Panc1 (cell line): ENCODE measurements at regions of chr3 and their contacts with region 1.

Region 1: GRCh38 chr3:121481106-121481880 is 64.5 kb downstream of the POLQ start:
- DNase-seq: no peak
- ATAC-seq: no peak
- H3K4me3 ChIP-seq: no peak overlapping the region
- H3K27ac ChIP-seq: no peak overlapping the region
- H3K4me1 ChIP-seq: no peaks in the 10 kb centered on the region
- H3K27me3 ChIP-seq: no peaks in the 10 kb centered on the region
- CTCF ChIP-seq: no peak

Region 2: GRCh38 chr3:121072133-121072532 is 409.2 kb before region 1 on chr3:
- CTCF ChIA-PET with region 1: no interaction called
- POLR2A ChIA-PET with region 1: no interaction called
- in situ Hi-C with region 1: no loop called
- intact Hi-C with region 1: no loop called
- DNase-seq: no peak
- ATAC-seq: no peak
- H3K4me3 ChIP-seq: no peak overlapping the region
- H3K27ac ChIP-seq: no peak overlapping the region
- H3K4me1 ChIP-seq: no peaks in the 10 kb centered on the region
- H3K27me3 ChIP-seq: no peaks in the 10 kb centered on the region
- CTCF ChIP-seq: no peak

Region 3: DNA sequence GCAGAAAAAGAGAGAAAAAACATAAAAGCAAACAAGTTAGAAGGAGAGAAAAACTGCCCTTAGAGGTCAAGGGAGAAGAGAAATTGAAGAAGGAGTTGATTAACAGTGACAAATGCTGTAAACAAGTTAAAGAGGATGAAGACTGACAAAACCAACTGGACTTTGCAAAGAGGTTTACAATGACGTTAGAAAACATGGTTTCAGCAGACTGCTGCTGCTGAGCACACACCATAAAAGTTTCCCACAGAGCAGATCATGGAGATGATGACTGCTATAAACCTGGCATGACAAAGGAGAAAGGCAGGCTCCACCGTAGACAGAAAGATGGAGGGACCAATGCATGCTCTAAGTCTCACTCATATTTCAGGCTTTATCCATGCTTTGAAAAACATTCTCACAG is 14.2 kb before region 1 on chr3:
- CTCF ChIA-PET with region 1: interaction called, 16 read pairs
- POLR2A ChIA-PET with region 1: interaction called, 6 read pairs
- in situ Hi-C with region 1: no loop called
- intact Hi-C with region 1: no loop called
- DNase-seq: no peak
- ATAC-seq: no peak
- H3K4me3 ChIP-seq: no peak overlapping the region
- H3K27ac ChIP-seq: no peak overlapping the region
- H3K4me1 ChIP-seq: no peaks in the 10 kb centered on the region
- H3K27me3 ChIP-seq: no peaks in the 10 kb centered on the region
- CTCF ChIP-seq: no peak